Left lung (tissue), 14 donors: ENCODE measurements at regions of chr3 and their contacts with region 1.

Region 1: DNA sequence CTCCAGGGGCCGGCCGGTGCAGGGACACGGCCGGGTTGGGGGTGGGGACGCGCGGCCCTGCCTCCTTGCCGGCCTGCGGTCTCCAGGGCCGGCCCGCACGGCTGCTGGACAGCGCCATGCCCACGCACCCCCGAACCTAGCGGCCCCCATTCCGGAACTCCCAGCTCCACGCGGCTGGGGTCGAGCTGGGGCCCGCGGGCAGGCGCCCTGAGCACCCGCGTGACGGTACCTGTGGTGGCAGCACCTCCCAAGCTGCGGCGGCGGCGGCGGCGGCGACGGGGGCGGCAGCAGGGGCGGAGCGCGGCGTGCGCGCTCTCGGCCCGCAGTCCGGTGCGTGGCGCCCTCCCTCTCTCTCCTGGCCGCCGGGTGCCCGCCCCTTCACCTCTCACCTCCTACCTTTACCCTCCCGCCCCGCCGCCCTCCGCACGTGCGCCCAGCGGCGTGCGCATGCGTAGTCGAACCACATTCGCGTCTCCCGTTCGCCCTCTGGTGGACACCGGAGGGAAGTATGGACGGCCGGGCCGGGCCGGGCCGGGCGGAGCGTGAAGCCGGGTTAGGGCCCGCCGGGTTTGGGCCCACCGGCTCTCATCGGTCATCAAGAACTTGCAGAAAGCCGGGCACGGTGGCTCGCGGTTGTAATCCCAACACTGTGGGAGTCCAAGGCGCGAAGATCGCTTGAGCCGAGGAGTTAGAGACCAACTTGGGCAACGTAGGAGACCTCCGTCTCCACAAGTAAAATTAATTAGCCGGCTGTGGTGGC is at the start of gene SCAP:
- DNase-seq: peak; percentile 79 to 97 (median 92)
- ATAC-seq: peak; percentile 96
- H3K4me3 ChIP-seq: peak within 1 kb of the TSS; percentile 92 to 96
- H3K27ac ChIP-seq: peak within 1 kb of the TSS; percentile 65 to 81
- H3K4me1 ChIP-seq: peaks cover 0 to 29% of the 10 kb centered on the region in 2 donors
- H3K27me3 ChIP-seq: no peaks in the 10 kb centered on the region
- CTCF ChIP-seq: peak; percentile 94 to 97
- polyA plus RNA-seq, gene SCAP: 52.8 to 67.2 (median 58.2) TPM

Region 2: GRCh38 chr3:47420511-47421484 is 55.0 kb before region 1 on chr3:
- intact Hi-C with region 1: loop called (anchors 5 to 10 kb)
- DNase-seq: peak; percentile 72 to 88 (median 84)
- ATAC-seq: peak; percentile 92
- H3K4me3 ChIP-seq: no peak overlapping the region
- H3K27ac ChIP-seq: peak overlapping the region; percentile 39 to 64
- H3K4me1 ChIP-seq: peaks cover 9 to 20% of the 10 kb centered on the region in 2 donors
- H3K27me3 ChIP-seq: no peaks in the 10 kb centered on the region
- CTCF ChIP-seq: peak; percentile 91 to 94